Activated naive CD4-positive, alpha-beta T cell treated with anti-CD3 and anti-CD28 coated beads for 36 hours (primary cell): ENCODE measurements at regions of chr13 and their contacts with region 1.

Region 1: GRCh38 chr13:20703780-20704445 is 414 bp downstream of the IL17D start:
- DNase-seq: peak; percentile 72
- H3K4me3 Mint-ChIP-seq: no peak overlapping the region
- H3K27ac Mint-ChIP-seq: no peak overlapping the region
- H3K4me1 Mint-ChIP-seq: peaks cover 5% of the 10 kb centered on the region
- H3K27me3 Mint-ChIP-seq: peaks cover 13% of the 10 kb centered on the region

Region 2: GRCh38 chr13:19759671-19760070 is 944.2 kb before region 1 on chr13:
- CTCF ChIA-PET with region 1: no interaction called
- intact Hi-C with region 1: no loop called
- DNase-seq: no peak
- H3K4me3 Mint-ChIP-seq: no peak overlapping the region
- H3K27ac Mint-ChIP-seq: no peak overlapping the region
- H3K4me1 Mint-ChIP-seq: peaks cover 33% of the 10 kb centered on the region
- H3K27me3 Mint-ChIP-seq: no peaks in the 10 kb centered on the region

Region 3: GRCh38 chr13:20411638-20412360 is 292.1 kb before region 1 on chr13:
- CTCF ChIA-PET with region 1: interaction called, 3 read pairs
- intact Hi-C with region 1: loop called (anchors 5 kb)
- DNase-seq: peak; percentile 78
- H3K4me3 Mint-ChIP-seq: no peak overlapping the region
- H3K27ac Mint-ChIP-seq: peak overlapping the region; percentile 50
- H3K4me1 Mint-ChIP-seq: peaks cover 21% of the 10 kb centered on the region
- H3K27me3 Mint-ChIP-seq: no peaks in the 10 kb centered on the region

Region 4: GRCh38 chr13:20525690-20526544 is 178.0 kb before region 1 on chr13 and contains the start of gene CRYL1:
- CTCF ChIA-PET with region 1: no interaction called
- intact Hi-C with region 1: loop called (anchors 10 kb)
- DNase-seq: peak; percentile 76
- H3K4me3 Mint-ChIP-seq: peak within 1 kb of the TSS; percentile 83
- H3K27ac Mint-ChIP-seq: peak within 1 kb of the TSS; percentile 83
- H3K4me1 Mint-ChIP-seq: peaks cover 32% of the 10 kb centered on the region
- H3K27me3 Mint-ChIP-seq: no peaks in the 10 kb centered on the region
- total RNA-seq, gene CRYL1: 8.9 to 9.3 TPM

Region 5: DNA sequence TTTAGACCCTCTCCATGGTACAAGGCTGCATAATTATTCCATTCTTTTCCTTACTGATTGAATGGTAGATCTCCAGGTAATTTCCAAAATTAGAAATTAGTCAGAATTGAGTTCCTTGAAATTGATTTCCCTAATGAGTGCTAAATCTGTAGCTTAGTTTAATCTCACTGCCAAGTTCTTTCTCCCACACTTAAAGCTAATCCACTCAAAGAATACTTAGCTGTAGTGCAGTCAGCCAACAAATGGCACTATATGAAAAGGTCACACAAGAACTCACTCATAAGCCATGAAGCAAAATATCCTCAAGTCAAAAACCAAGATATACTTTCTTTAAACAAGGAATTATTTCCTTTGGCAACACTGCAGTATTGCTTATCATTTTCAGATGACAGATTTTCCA is 136.7 kb after region 1 on chr13:
- CTCF ChIA-PET with region 1: no interaction called
- intact Hi-C with region 1: no loop called
- DNase-seq: no peak
- H3K4me3 Mint-ChIP-seq: no peak overlapping the region
- H3K27ac Mint-ChIP-seq: no peak overlapping the region
- H3K4me1 Mint-ChIP-seq: peaks cover 2% of the 10 kb centered on the region
- H3K27me3 Mint-ChIP-seq: no peaks in the 10 kb centered on the region

Region 6: GRCh38 chr13:20902438-20903163 is 198.7 kb after region 1 on chr13 and contains the start of gene XPO4:
- CTCF ChIA-PET with region 1: no interaction called
- intact Hi-C with region 1: loop called (anchors 5 kb)
- DNase-seq: peak; percentile 83
- H3K4me3 Mint-ChIP-seq: peak within 1 kb of the TSS; percentile 95
- H3K27ac Mint-ChIP-seq: peak within 1 kb of the TSS; percentile 95
- H3K4me1 Mint-ChIP-seq: peaks cover 29% of the 10 kb centered on the region
- H3K27me3 Mint-ChIP-seq: no peaks in the 10 kb centered on the region
- total RNA-seq, gene XPO4: 20.4 to 21.2 TPM